ENCODE measurements at regions of chr10 and their contacts with region 1.

Region 1: GRCh38 chr10:13776861-13777311 is 190.1 kb downstream of the PRPF18 start:
- DNase-seq: no peak
- ATAC-seq: peak; percentile 69
- H3K4me3 ChIP-seq: no peak overlapping the region
- H3K27ac ChIP-seq: peak overlapping the region; percentile 36
- H3K4me1 ChIP-seq: peaks cover 14% of the 10 kb centered on the region
- H3K27me3 ChIP-seq: no peaks in the 10 kb centered on the region
- CTCF ChIP-seq: no peak
- EP300 ChIP-seq: no peak
- POLR2A ChIP-seq: no peak
- RAD21 ChIP-seq: no peak

Region 2: GRCh38 chr10:13586676-13587355 is 190.1 kb before region 1 on chr10 and contains the start of gene PRPF18:
- CTCF ChIA-PET with region 1: interaction called, 4 read pairs
- POLR2A ChIA-PET with region 1: interaction called, 3 read pairs
- RAD21 ChIA-PET with region 1: no interaction called
- SMC1A ChIA-PET with region 1: interaction called, 4 read pairs
- in situ Hi-C with region 1: no loop called
- intact Hi-C with region 1: loop called (anchors 5 kb)
- DNase-seq: peak; percentile 76
- ATAC-seq: peak; percentile 99
- H3K4me3 ChIP-seq: peak within 1 kb of the TSS; percentile 90
- H3K27ac ChIP-seq: peak within 1 kb of the TSS; percentile 61
- H3K4me1 ChIP-seq: no peaks in the 10 kb centered on the region
- H3K27me3 ChIP-seq: no peaks in the 10 kb centered on the region
- CTCF ChIP-seq: peak; percentile 98 to 99 (median 99)
- EP300 ChIP-seq: no peak
- POLR2A ChIP-seq: peak; percentile 87
- RAD21 ChIP-seq: 0 out of 2 replicates have a peak, but pooled peaks have one; percentile 24
- polyA plus RNA-seq, gene PRPF18: 28.6 to 35.8 TPM

Region 3: GRCh38 chr10:13659897-13660550 is 116.9 kb before region 1 on chr10:
- CTCF ChIA-PET with region 1: interaction called, 31 read pairs
- POLR2A ChIA-PET with region 1: interaction called, 3 read pairs
- RAD21 ChIA-PET with region 1: interaction called, 13 read pairs
- SMC1A ChIA-PET with region 1: interaction called, 24 read pairs
- in situ Hi-C with region 1: loop called (anchors 5 kb)
- intact Hi-C with region 1: loop called (anchors 1 kb)
- DNase-seq: peak; percentile 17
- ATAC-seq: peak; percentile 80
- H3K4me3 ChIP-seq: no peak overlapping the region
- H3K27ac ChIP-seq: peak overlapping the region; percentile 37; the same call in 1 of the 2 replicates
- H3K4me1 ChIP-seq: peaks cover 8% of the 10 kb centered on the region
- H3K27me3 ChIP-seq: no peaks in the 10 kb centered on the region
- CTCF ChIP-seq: peak; percentile 91 to 93 (median 92)
- EP300 ChIP-seq: no peak
- POLR2A ChIP-seq: no peak
- RAD21 ChIP-seq: peak; percentile 99

Region 4: GRCh38 chr10:13707156-13707881 is 69.6 kb before region 1 on chr10:
- CTCF ChIA-PET with region 1: interaction called, 6 read pairs
- POLR2A ChIA-PET with region 1: interaction called, 9 read pairs
- RAD21 ChIA-PET with region 1: interaction called, 20 read pairs
- SMC1A ChIA-PET with region 1: interaction called, 25 read pairs
- in situ Hi-C with region 1: no loop called
- intact Hi-C with region 1: loop called (anchors 5 kb)
- DNase-seq: no peak
- ATAC-seq: peak; percentile 77
- H3K4me3 ChIP-seq: peak overlapping the region; percentile 86
- H3K27ac ChIP-seq: peak overlapping the region; percentile 92
- H3K4me1 ChIP-seq: peaks cover 25% of the 10 kb centered on the region
- H3K27me3 ChIP-seq: no peaks in the 10 kb centered on the region
- CTCF ChIP-seq: no peak
- EP300 ChIP-seq: no peak
- POLR2A ChIP-seq: peak; percentile 65
- RAD21 ChIP-seq: no peak; the same call in 1 of the 2 replicates

Region 5: DNA sequence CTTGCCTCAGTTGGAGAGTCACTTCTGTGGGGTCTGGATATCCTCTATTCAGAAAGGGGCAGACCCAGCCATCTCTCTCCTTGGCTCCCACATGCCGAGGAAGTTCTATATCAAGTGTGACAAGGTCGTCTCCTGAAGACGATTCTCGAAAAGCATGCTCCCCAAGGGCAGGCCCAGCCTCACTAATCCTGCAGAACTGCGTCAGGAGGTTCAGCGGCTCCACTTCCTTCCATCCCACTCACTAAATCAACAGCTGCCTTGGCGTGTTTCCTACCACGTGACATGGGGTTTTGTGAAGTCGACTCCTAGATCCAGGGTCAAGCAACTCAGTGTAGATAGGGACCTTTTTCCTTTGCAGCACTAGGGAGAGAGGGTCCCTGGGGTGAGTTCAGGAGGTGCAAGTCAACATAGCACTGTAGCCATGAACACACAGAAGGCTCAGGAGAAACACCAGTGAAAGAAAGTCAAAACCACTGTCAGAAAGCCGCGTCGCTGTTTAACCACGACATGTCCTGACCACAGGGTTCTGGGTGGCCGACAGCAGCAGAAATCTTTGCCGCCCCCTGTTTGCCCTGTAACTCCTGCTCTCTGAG is 33.7 kb before region 1 on chr10:
- CTCF ChIA-PET with region 1: interaction called, 11 read pairs
- POLR2A ChIA-PET with region 1: interaction called, 11 read pairs
- RAD21 ChIA-PET with region 1: interaction called, 9 read pairs
- SMC1A ChIA-PET with region 1: interaction called, 21 read pairs
- in situ Hi-C with region 1: no loop called
- intact Hi-C with region 1: loop called (anchors 1 kb)
- DNase-seq: peak; percentile 46
- ATAC-seq: peak; percentile 39
- H3K4me3 ChIP-seq: no peak overlapping the region; the same call in 1 of the 2 replicates
- H3K27ac ChIP-seq: peak overlapping the region; percentile 86
- H3K4me1 ChIP-seq: peaks cover 56% of the 10 kb centered on the region
- H3K27me3 ChIP-seq: no peaks in the 10 kb centered on the region
- CTCF ChIP-seq: no peak
- EP300 ChIP-seq: peak in 1 of 2 experiments; percentile 17; a peak in 1 of 4 replicates
- POLR2A ChIP-seq: peak; percentile 40; the same call in 1 of the 2 replicates
- RAD21 ChIP-seq: 0 out of 2 replicates have a peak, but pooled peaks have one; percentile 3

Region 6: DNA sequence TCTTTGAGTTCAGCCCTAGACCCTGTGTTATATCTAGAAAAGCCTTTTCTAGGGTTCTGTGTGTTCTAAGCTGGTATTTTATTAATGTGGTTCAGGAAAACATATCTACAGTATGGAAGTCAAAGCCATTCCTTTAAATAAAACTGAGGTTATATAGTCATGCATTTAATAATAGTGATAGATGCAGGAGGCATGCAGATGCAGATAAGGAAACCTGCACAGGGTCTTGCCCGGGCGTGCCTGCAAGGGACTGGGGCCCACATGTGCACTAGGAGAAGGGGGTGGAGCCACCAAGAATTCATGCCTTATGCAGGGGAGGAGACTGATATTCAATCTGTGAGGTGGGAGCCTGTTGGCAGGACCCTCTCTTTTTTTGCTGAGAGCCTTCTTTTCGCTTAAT is 18.6 kb before region 1 on chr10:
- CTCF ChIA-PET with region 1: interaction called, 6 read pairs
- POLR2A ChIA-PET with region 1: interaction called, 19 read pairs
- RAD21 ChIA-PET with region 1: interaction called, 100 read pairs
- SMC1A ChIA-PET with region 1: interaction called, 189 read pairs
- in situ Hi-C with region 1: no loop called
- intact Hi-C with region 1: no loop called
- DNase-seq: no peak
- ATAC-seq: peak; percentile 58
- H3K4me3 ChIP-seq: no peak overlapping the region
- H3K27ac ChIP-seq: peak overlapping the region; percentile 100
- H3K4me1 ChIP-seq: peaks cover 80% of the 10 kb centered on the region
- H3K27me3 ChIP-seq: no peaks in the 10 kb centered on the region
- CTCF ChIP-seq: no peak
- EP300 ChIP-seq: no peak
- POLR2A ChIP-seq: no peak
- RAD21 ChIP-seq: no peak

Measured in GM12878 (cell line).